ENCODE measurements at regions of chr18 and their contacts with region 1.

Region 1: DNA sequence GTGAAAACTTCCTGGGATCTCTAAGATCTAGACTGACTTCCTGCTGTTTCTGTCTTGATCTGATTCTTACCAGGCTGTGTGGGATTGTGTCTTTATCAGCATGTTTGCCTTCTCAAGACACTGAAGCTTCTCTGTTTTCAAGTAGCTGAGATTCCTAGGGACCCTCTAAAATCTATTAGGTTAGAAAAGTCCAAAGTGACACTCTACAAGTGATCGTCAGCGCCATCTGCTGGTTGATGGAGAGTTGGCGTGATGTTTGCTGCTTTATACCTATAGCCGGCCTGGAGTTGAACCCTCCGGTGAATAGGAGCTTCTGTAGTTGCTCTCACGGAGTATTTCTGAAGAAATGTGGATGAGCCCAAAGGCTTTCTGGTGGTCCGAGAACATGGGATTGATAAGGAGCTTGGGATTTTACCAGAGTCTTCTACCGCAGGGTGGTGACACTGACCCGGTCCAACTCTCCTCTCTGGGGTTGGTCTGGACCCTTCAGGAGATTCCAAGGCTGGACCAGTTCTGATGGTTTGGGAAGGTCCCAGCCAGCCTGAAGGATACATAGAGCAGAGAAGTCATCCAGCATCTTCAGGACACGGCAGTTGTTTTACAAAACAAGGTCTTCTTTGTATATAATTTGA is 96.0 kb upstream of the TTC39C start:
- DNase-seq: peak; percentile 70
- H3K4me3 ChIP-seq: no peak overlapping the region
- H3K27ac ChIP-seq: no peak overlapping the region
- H3K4me1 ChIP-seq: no peaks in the 10 kb centered on the region
- H3K27me3 ChIP-seq: no peaks in the 10 kb centered on the region
- CTCF ChIP-seq: peak; percentile 79 to 80
- POLR2A ChIP-seq: no peak

Region 2: GRCh38 chr18:23619388-23619881 is 299.1 kb before region 1 on chr18:
- CTCF ChIA-PET with region 1: interaction called, 15 read pairs
- POLR2A ChIA-PET with region 1: no interaction called
- dilution Hi-C with region 1: no loop called
- intact Hi-C with region 1: loop called (anchors 1 kb)
- DNase-seq: peak; percentile 20
- H3K4me3 ChIP-seq: peak overlapping the region in 2 of 3 experiments; percentile 37 to 48
- H3K27ac ChIP-seq: no peak overlapping the region
- H3K4me1 ChIP-seq: peaks cover 6% of the 10 kb centered on the region
- H3K27me3 ChIP-seq: peaks cover 4 to 11% of the 10 kb centered on the region in 2 experiments
- CTCF ChIP-seq: peak in 1 of 2 donors; percentile 10
- POLR2A ChIP-seq: no peak

Region 3: DNA sequence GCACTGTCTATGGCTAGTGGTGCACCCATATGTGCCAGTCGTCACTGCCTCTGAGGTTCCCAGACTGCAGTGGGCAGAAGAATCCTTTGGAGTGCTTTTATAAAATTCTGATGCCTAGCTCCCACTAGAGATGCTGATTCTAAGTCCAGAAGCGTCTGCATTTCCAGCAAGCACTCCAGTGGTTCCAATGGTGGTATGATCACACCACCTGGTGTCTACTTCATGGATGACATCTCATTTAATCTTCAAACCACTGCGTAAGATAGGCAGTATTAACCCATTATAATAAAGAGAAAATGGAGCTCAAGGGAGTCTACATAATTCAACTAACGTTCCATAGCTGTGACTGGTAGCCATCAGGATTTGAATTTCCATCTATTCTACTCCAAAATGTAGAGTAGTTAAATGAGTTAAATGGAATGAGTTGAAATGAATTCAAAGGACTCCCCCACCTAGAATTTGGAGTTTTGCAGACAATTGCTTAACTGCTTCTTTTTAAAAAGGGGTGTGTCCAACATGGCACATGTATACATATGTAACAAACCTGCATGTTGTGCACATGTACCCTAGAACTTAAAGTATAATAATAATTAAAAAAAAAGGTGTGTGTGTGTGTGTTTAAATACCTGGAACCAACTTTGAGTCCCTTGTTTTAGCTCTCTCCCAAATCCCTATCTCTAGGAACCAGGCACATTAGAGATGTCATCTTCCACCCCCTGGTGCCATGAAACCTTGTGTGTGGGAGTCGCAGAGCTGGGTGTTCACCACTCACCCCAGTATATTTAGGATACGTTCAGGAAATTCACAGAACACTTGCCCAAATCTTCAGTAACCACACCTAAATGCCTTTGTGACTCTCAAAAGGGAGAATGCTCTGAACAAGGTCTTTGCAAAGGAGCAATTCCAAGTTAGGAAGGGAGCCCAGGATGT is 215.2 kb before region 1 on chr18:
- CTCF ChIA-PET with region 1: interaction called, 24 read pairs
- POLR2A ChIA-PET with region 1: no interaction called
- dilution Hi-C with region 1: no loop called
- intact Hi-C with region 1: loop called (anchors 2 kb)
- DNase-seq: peak; percentile 80
- H3K4me3 ChIP-seq: no peak overlapping the region
- H3K27ac ChIP-seq: no peak overlapping the region
- H3K4me1 ChIP-seq: no peaks in the 10 kb centered on the region
- H3K27me3 ChIP-seq: no peaks in the 10 kb centered on the region
- CTCF ChIP-seq: peak; percentile 35 to 49
- POLR2A ChIP-seq: no peak

Region 4: DNA sequence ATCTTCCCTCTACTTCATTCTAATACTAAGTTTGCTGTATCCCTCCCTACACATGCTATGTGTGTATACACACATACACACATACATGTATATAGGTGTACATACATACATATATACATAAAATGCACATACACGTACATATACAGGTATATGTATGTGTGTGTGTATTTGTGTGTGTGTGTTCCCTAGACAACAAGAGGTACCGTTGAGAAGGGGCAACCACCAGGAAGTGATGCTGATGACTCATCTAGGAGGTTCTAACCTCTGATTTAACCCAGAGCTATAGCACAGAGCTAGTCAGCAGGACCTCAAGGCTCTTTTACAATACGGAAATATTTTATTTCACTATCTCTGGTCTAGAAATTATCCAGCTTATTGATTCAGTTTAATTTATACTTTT is 90.1 kb before region 1 on chr18:
- CTCF ChIA-PET with region 1: interaction called, 28 read pairs
- POLR2A ChIA-PET with region 1: no interaction called
- dilution Hi-C with region 1: no loop called
- intact Hi-C with region 1: loop called (anchors 5 kb)
- DNase-seq: peak; percentile 80
- H3K4me3 ChIP-seq: no peak overlapping the region
- H3K27ac ChIP-seq: peak overlapping the region; percentile 37
- H3K4me1 ChIP-seq: peaks cover 11% of the 10 kb centered on the region
- H3K27me3 ChIP-seq: no peaks in the 10 kb centered on the region
- CTCF ChIP-seq: no peak
- POLR2A ChIP-seq: no peak

Region 5: GRCh38 chr18:23861805-23862470 is 56.6 kb before region 1 on chr18:
- CTCF ChIA-PET with region 1: interaction called, 25 read pairs
- POLR2A ChIA-PET with region 1: no interaction called
- dilution Hi-C with region 1: no loop called
- intact Hi-C with region 1: no loop called
- DNase-seq: peak; percentile 59
- H3K4me3 ChIP-seq: no peak overlapping the region
- H3K27ac ChIP-seq: peak overlapping the region; percentile 29
- H3K4me1 ChIP-seq: peaks cover 9% of the 10 kb centered on the region
- H3K27me3 ChIP-seq: no peaks in the 10 kb centered on the region
- CTCF ChIP-seq: no peak
- POLR2A ChIP-seq: no peak

Region 6: GRCh38 chr18:23893653-23894052 is 24.9 kb before region 1 on chr18:
- CTCF ChIA-PET with region 1: interaction called, 11 read pairs
- POLR2A ChIA-PET with region 1: interaction called, 8 read pairs
- dilution Hi-C with region 1: no loop called
- intact Hi-C with region 1: no loop called
- DNase-seq: no peak
- H3K4me3 ChIP-seq: no peak overlapping the region
- H3K27ac ChIP-seq: no peak overlapping the region
- H3K4me1 ChIP-seq: no peaks in the 10 kb centered on the region
- H3K27me3 ChIP-seq: no peaks in the 10 kb centered on the region
- CTCF ChIP-seq: no peak
- POLR2A ChIP-seq: no peak

Region 7: GRCh38 chr18:24009651-24010333 is 91.3 kb after region 1 on chr18:
- CTCF ChIA-PET with region 1: no interaction called
- POLR2A ChIA-PET with region 1: no interaction called
- dilution Hi-C with region 1: no loop called
- intact Hi-C with region 1: no loop called
- DNase-seq: no peak
- H3K4me3 ChIP-seq: no peak overlapping the region
- H3K27ac ChIP-seq: no peak overlapping the region
- H3K4me1 ChIP-seq: peaks cover under 1% of the 10 kb centered on the region
- H3K27me3 ChIP-seq: peaks cover 39 to 51% of the 10 kb centered on the region in 2 experiments
- CTCF ChIP-seq: no peak
- POLR2A ChIP-seq: no peak

Region 8: GRCh38 chr18:24068945-24069693 is 150.6 kb after region 1 on chr18:
- CTCF ChIA-PET with region 1: no interaction called
- POLR2A ChIA-PET with region 1: no interaction called
- dilution Hi-C with region 1: no loop called
- intact Hi-C with region 1: no loop called
- DNase-seq: no peak
- H3K4me3 ChIP-seq: no peak overlapping the region
- H3K27ac ChIP-seq: no peak overlapping the region
- H3K4me1 ChIP-seq: no peaks in the 10 kb centered on the region
- H3K27me3 ChIP-seq: no peaks in the 10 kb centered on the region
- CTCF ChIP-seq: no peak
- POLR2A ChIP-seq: no peak

Region 9: GRCh38 chr18:24118750-24119577 is 200.4 kb after region 1 on chr18:
- CTCF ChIA-PET with region 1: interaction called, 5 read pairs
- POLR2A ChIA-PET with region 1: no interaction called
- dilution Hi-C with region 1: no loop called
- intact Hi-C with region 1: loop called (anchors 1 kb)
- DNase-seq: peak; percentile 81
- H3K4me3 ChIP-seq: no peak overlapping the region
- H3K27ac ChIP-seq: no peak overlapping the region
- H3K4me1 ChIP-seq: no peaks in the 10 kb centered on the region
- H3K27me3 ChIP-seq: no peaks in the 10 kb centered on the region
- CTCF ChIP-seq: peak; percentile 66 to 74
- POLR2A ChIP-seq: no peak